Dorsolateral prefrontal cortex (tissue), 120 donors: ENCODE measurements at regions of chr10 and their contacts with region 1.

Region 1: DNA sequence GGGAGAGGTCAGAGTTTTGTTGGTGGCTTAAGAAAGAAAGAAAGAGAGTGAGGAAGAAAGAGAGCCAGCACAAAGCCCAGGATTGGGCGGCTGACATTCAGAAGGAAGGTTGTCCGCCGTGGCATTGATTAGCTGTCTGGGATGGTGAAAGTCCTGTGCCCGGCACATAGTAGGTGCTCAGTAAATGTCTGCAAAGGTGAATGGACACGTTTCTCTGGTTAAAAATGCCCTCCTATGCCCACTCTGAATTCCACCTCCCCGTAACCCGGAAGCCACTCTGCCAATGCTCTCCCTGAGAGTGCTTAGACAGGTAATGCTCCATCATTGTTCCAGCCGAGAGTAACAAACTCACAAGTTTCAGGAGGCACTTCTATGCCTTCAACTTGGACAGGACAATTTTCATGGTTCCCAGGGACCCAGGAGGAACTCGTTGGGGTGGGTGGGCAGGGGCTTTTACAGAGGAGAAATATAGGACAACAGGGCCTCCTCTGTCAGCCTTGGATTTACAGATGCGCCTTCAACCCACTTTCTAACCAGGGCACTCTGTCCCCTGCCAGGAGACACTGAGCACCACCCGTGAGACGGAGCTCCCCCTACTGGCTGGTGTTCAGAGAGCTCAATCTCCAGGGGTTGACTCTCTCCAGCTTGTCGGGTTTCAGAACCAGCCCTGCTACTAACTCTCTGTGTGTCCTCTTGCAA is 411.5 kb upstream of the ZMIZ1 start:
- DNase-seq: peak; percentile 19 to 70 (median 58)
- H3K4me3 ChIP-seq: peak overlapping the region in 2 of 59 donors; percentile 9 to 25
- H3K27ac ChIP-seq: peak overlapping the region in 4 of 59 donors; percentile 8 to 54 (median 15)
- H3K27me3 ChIP-seq: no peaks in the 10 kb centered on the region
- CTCF ChIP-seq: peak in 55 of 56 donors; percentile 23 to 73 (median 61)

Region 2: DNA sequence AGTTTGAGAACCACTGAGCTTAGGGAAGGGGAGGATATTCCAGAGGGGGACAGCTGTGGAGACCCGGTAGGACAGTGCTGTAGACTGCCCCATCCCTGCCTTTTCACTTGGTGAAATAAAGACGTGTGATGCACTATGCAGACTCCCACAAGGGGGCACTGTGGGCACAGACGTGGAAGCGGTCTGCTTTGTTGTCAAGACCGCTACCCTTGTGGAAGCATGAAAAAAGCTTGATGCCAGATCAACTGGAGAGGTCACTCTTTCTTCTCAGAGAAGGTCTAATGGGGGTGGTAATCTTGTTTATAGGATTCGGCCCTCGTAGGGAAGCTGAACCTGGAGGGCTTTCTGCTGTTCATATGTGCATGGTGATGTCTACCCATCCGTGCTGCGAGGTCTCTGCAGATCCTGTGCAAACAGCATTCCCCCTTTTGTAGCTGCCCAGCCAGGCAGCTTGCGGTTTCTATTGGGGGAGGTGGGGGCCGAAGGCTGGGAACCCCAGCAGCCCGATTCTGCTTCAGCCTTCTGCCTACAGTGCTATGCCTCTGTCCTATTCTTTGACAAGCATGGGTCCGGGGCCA is 609.9 kb before region 1 on chr10:
- intact Hi-C with region 1: loop called in 1 of 2 experiments (anchors 10 kb)
- DNase-seq: peak; percentile 88 to 98 (median 92)
- H3K4me3 ChIP-seq: peak overlapping the region in 17 of 59 donors; percentile 10 to 32 (median 22)
- H3K27ac ChIP-seq: peak overlapping the region in 12 of 59 donors; percentile 19 to 66 (median 42)
- H3K27me3 ChIP-seq: no peaks in the 10 kb centered on the region
- CTCF ChIP-seq: peak; percentile 88 to 99 (median 94)

Region 3: DNA sequence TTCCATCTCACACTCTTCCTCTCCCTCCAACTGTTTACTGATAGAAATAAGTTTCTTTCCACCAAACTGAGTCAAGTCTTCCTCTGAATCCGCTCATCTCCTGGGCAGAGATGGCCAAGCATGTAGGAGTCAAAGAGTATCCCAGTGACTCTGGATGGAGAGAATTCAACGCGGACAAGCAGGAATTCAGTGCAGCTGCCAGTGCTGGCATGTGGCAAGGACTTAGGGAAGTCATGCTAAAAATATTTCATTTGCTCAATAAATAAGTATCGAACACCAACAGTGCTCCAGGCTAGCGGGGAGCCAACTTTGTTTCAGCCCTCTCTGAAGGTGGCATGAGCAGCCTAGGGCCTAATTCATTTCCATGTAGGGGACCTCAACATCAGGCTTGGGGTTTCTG is 59.9 kb after region 1 on chr10:
- intact Hi-C with region 1: no loop called
- DNase-seq: no peak
- H3K4me3 ChIP-seq: no peak overlapping the region
- H3K27ac ChIP-seq: no peak overlapping the region
- H3K27me3 ChIP-seq: peaks cover 0 to 4% (median 0%) of the 10 kb centered on the region in 45 donors
- CTCF ChIP-seq: no peak

Region 4: GRCh38 chr10:78931321-78932053 is 274.2 kb after region 1 on chr10:
- intact Hi-C with region 1: no loop called
- DNase-seq: peak in 1 of 10 donors; percentile 36
- H3K4me3 ChIP-seq: no peak overlapping the region
- H3K27ac ChIP-seq: peak overlapping the region in 4 of 59 donors; percentile 6 to 54 (median 38)
- H3K27me3 ChIP-seq: no peaks in the 10 kb centered on the region
- CTCF ChIP-seq: no peak